Left ventricle myocardium superior (tissue), 1 donor: ENCODE measurements at regions of chr6 and their contacts with region 1.

Region 1: GRCh38 chr6:99746261-99746895 is 139.7 kb downstream of the PRDM13 start:
- DNase-seq: peak; percentile 31
- ATAC-seq: peak; percentile 81

Region 2: DNA sequence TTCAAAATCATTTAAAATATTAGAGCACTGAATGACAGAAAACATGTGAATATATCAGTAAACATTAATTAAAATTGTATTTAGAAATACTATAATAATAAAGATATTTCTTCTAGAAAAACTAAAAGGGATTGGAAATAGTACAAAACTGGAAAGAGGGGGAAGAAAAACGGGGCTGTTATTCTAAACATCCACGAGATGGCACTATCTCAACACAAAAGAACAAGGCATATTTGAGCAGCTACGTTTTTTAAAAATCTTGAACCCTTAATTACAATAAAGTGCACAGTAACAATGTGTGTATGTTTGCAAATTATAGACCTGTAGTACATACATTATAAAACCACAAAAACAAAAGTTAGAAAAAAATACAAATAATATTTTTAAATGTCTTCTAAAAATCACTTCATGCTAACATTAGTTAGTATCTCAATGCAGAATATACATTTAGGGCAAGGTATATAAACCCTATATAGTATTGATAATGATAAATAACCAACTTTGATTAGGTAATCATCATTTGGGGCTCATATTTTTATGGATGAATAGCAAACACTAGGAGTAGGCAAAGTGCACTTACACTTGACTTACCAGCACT is 278.8 kb before region 1 on chr6:
- intact Hi-C with region 1: loop called (anchors 5 kb)
- DNase-seq: no peak
- ATAC-seq: no peak

Region 3: DNA sequence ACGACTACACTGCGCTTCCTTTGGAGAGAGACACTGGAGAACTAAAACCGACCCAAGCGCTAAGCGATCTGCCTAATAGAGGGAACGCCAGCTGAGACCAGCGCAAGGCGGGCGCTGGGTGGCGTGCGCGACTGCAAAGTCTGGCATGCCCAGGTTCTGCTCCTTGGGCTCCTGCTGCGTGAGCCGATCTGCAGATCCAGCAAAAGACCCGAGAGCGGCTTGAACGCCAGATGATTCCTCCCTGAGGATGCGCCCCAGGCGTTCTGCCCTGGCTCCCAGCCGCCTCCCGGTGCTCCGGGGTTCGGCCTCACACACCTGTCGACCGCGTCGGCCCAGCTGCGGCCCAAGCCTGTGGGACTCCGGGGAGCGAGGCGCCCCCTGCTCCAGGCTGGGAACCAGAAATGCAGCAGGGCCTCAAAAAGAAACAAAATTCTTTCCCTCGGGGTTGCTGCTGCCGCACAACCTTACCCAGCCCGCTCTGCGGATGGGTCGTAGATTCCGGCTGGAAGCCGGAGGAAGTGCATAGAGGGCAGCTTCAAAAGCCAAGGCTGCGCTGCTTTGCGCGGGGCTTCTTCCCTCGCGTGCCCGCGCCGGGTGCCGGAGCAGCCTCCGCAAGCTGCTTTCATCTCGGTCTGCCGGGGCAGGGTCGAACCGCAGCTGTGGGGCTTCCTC is 157.6 kb before region 1 on chr6:
- intact Hi-C with region 1: loop called (anchors 10 kb)
- DNase-seq: peak; percentile 75
- ATAC-seq: peak; percentile 98

Region 4: GRCh38 chr6:99645986-99646385 is 100.4 kb before region 1 on chr6:
- intact Hi-C with region 1: no loop called
- DNase-seq: no peak
- ATAC-seq: no peak

Region 5: DNA sequence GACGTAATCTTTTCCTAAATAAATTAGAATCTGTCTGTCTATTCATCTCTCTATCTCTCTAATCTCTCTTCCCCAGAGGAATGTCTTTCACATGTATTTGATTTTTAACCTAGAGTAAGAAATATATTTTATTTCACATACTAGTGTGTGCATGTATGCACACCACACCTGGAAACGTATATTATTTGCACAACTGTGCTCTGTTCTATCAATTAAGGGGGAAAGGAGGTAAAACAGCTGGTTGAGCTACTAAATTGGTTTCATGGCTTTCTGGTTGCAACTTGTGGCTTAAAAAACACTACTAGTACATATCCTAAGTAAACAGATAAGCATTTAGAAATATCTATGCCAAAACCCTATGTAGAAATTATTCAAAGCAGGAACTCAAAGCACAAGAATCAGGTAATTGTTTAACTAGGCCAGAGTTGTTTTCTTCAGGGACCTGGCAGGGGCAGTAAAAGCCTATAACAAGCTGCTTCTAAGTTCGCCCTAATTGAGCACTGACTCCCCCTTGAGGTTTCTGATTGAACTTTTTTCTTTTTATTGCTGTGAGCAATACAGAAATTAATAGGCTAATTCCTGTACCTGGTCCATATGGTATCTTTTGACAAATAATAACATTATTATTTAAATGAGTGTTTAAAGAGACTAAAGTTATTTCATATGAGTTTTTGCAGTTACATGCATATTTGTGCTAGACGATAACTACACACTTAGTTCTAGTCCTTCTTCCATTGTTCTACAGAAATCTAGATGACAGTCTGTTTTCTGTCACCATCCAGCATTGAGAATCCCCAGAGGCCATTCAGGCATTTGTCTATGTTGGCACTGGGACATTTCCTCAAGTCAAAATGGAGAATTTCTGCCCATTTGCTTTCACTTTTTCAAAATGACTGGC is 159.1 kb after region 1 on chr6:
- intact Hi-C with region 1: no loop called
- DNase-seq: no peak
- ATAC-seq: peak; percentile 27